ENCODE measurements at regions of chr10 and their contacts with region 1.

Region 1: DNA sequence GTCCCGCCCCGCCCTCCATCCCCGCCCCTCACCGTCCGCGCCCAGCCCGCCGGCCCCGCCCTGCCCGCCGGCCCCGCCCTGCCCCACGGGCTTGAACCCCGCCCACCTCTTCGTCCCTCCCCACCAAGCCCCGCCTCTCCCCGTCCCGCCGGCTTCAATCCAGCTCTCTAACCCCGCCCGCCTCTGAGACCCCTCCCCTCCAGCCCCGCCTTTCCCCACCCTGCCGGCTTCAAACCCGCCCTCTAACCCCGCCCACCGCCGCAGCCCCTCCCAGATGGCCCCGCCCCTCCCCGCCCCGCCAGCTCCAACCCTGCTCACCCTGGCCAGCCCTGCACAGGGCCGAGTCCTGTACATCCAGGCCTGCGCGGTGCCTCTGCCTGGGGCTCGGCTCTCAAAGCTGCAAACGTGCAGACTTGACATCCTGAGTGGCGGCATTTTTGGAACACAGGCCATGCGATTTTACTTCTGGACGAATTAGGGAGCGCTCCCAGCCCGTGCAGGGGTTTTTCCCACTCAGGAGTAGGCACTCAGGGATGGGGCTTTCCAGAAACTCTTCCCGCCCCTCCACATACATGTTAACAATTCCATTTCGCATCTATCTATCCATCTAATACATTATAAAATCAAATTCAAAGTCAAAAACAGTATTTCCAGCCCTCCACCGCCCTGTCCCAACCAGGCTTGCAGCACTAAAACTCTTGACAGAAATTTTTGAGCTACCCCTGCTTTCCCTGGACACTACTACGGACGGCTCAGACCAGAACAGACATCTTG is 475 bp upstream of the NMT2 start:
- DNase-seq: peak; percentile 84
- H3K4me3 Mint-ChIP-seq: peak overlapping the region; percentile 55
- H3K27ac Mint-ChIP-seq: peak overlapping the region; percentile 74
- H3K4me1 Mint-ChIP-seq: peaks cover 51% of the 10 kb centered on the region
- H3K27me3 Mint-ChIP-seq: peaks cover 5% of the 10 kb centered on the region

Region 2: GRCh38 chr10:14528450-14528849 is 640.5 kb before region 1 on chr10:
- intact Hi-C with region 1: loop called (anchors 10 kb)
- DNase-seq: no peak
- H3K4me3 Mint-ChIP-seq: peak overlapping the region; percentile 62
- H3K27ac Mint-ChIP-seq: peak overlapping the region; percentile 82
- H3K4me1 Mint-ChIP-seq: peaks cover 92% of the 10 kb centered on the region
- H3K27me3 Mint-ChIP-seq: no peaks in the 10 kb centered on the region

Region 3: GRCh38 chr10:14884082-14884481 is 284.9 kb before region 1 on chr10:
- intact Hi-C with region 1: no loop called
- DNase-seq: no peak
- H3K4me3 Mint-ChIP-seq: peak overlapping the region; percentile 6
- H3K27ac Mint-ChIP-seq: peak overlapping the region; percentile 34
- H3K4me1 Mint-ChIP-seq: peaks cover 31% of the 10 kb centered on the region
- H3K27me3 Mint-ChIP-seq: no peaks in the 10 kb centered on the region

Region 4: GRCh38 chr10:15097011-15097812 is 71.8 kb before region 1 on chr10 and contains the start of gene RPP38:
- intact Hi-C with region 1: loop called (anchors 1 kb)
- DNase-seq: peak; percentile 94
- H3K4me3 Mint-ChIP-seq: peak within 1 kb of the TSS; percentile 100
- H3K27ac Mint-ChIP-seq: peak within 1 kb of the TSS; percentile 99
- H3K4me1 Mint-ChIP-seq: peaks cover 29% of the 10 kb centered on the region
- H3K27me3 Mint-ChIP-seq: peaks cover 10% of the 10 kb centered on the region
- total RNA-seq, gene RPP38: 19.6 and 24.8 TPM in 2 replicates

Region 5: DNA sequence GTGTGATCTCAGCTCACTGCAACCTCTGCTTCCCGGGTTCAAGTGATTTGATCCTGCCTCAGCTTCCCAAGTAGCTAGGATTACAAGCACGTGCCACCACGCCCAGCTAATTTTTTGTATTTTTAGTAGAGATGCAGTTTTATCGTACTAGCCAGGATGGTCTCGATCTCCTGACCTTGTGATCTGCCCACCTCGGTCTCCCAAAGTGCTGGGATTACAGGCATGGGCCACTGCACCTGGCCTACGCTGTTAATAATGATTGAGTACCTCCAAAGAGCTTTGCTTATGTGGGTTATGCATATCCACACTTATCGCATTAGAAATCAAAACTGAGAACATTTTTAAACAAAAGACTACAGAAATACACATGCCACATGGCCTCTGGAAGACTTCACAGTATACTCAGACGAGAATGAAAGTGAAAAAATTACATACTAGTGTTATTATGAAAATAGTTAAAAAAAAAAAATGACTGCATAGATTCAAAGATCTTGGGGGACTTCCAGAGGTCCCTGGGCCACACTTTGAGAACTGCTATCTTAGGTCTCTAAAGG is 46.4 kb before region 1 on chr10:
- intact Hi-C with region 1: loop called (anchors 1 kb)
- DNase-seq: no peak
- H3K4me3 Mint-ChIP-seq: no peak overlapping the region
- H3K27ac Mint-ChIP-seq: peak overlapping the region; percentile 72
- H3K4me1 Mint-ChIP-seq: peaks cover 27% of the 10 kb centered on the region
- H3K27me3 Mint-ChIP-seq: no peaks in the 10 kb centered on the region

Region 6: DNA sequence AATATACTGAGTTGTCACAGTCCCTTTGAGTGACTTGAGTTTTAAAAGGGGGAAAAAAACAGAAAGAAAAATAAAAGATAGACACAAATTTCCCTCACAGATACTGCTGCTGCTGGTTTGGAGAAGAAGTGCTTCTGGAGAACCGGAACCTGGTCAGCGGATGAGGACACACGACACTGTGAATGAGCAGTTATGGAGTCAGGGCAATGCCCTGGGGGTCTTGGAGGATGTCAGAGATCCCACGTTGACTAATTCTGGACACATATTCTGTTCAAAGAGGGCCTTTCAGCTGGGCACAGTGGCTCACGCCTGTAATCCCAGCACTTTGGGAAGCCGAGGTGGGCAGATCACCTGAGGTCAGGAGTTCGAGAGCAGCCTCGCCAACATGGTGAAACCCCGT is 10.2 kb after region 1 on chr10:
- intact Hi-C with region 1: no loop called
- DNase-seq: no peak
- H3K4me3 Mint-ChIP-seq: no peak overlapping the region
- H3K27ac Mint-ChIP-seq: no peak overlapping the region
- H3K4me1 Mint-ChIP-seq: peaks cover 7% of the 10 kb centered on the region
- H3K27me3 Mint-ChIP-seq: peaks cover 16% of the 10 kb centered on the region

Region 7: DNA sequence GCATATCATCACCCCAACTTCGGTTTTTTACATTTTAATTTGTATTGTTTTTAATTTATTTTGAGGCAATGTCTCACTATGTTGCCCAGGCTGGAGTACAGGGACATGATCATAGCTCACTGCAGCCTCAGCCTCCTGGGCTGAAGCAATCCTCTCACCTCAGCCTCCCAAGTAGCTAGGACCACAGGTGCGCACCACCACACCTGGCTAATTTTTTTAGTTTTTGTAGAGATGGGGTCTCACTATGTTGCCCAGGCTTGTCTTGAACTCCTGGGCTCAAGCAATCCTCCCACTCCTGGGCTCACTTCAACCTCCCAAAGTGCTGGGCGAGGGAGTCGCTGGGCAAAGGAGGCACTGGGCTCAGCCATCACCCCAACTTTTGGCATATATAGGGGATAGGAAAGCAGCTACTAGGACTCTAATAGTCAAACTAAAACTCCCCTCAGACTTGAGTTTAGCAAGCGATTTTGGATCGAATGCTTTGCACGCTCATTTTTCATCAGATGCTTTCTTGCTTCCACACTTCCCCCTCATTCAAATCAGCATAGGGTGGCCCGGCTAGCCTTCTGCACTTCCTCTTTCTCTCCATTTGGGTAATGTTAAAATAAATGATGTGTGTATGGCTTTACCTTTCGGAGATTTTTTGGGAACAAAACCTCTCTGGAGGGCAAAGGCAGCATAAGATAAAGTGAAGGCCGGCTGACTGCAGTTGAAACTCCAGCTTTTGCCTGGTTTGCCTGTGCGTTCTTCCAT is 20.3 kb after region 1 on chr10:
- intact Hi-C with region 1: loop called (anchors 1 kb)
- DNase-seq: no peak
- H3K4me3 Mint-ChIP-seq: no peak overlapping the region
- H3K27ac Mint-ChIP-seq: no peak overlapping the region
- H3K4me1 Mint-ChIP-seq: peaks cover 37% of the 10 kb centered on the region
- H3K27me3 Mint-ChIP-seq: peaks cover 5% of the 10 kb centered on the region

Region 8: GRCh38 chr10:15254808-15255648 is 86.1 kb after region 1 on chr10:
- intact Hi-C with region 1: no loop called
- DNase-seq: peak; percentile 6
- H3K4me3 Mint-ChIP-seq: peak overlapping the region; percentile 78
- H3K27ac Mint-ChIP-seq: peak overlapping the region; percentile 25
- H3K4me1 Mint-ChIP-seq: peaks cover 22% of the 10 kb centered on the region
- H3K27me3 Mint-ChIP-seq: no peaks in the 10 kb centered on the region

Region 9: GRCh38 chr10:15370856-15371701 is 202.1 kb after region 1 on chr10 and contains the start of gene FAM171A1:
- intact Hi-C with region 1: loop called (anchors 1 kb)
- DNase-seq: peak; percentile 48
- H3K4me3 Mint-ChIP-seq: peak within 1 kb of the TSS; percentile 82
- H3K27ac Mint-ChIP-seq: peak within 1 kb of the TSS; percentile 9
- H3K4me1 Mint-ChIP-seq: no peaks in the 10 kb centered on the region
- H3K27me3 Mint-ChIP-seq: peaks cover 76% of the 10 kb centered on the region
- total RNA-seq, gene FAM171A1: 0.96 and 1.5 TPM in 2 replicates

Measured in activated T-helper 1 cell treated with anti-CD3 and anti-CD28 coated beads, Interleukin-12 subunit alpha, Interleukin-12 subunit beta, Interleukin-2, Interleukin-4 antibody, amounts not matched to agents 30 ng/mL and 10 ng/mL and 1 ng/mL, durations not matched to agents 14 hours and 24 hours and 36 hours (primary cell).